ENCODE measurements at regions of chr12 and their contacts with region 1.

Region 1: GRCh38 chr12:42482445-42483237 is 106.9 kb downstream of the PRICKLE1 start:
- DNase-seq: peak; percentile 31
- H3K4me3 Mint-ChIP-seq: peak overlapping the region; percentile 78
- H3K27ac Mint-ChIP-seq: no peak overlapping the region
- H3K4me1 Mint-ChIP-seq: peaks cover 10% of the 10 kb centered on the region
- H3K27me3 Mint-ChIP-seq: peaks cover 72% of the 10 kb centered on the region

Region 2: DNA sequence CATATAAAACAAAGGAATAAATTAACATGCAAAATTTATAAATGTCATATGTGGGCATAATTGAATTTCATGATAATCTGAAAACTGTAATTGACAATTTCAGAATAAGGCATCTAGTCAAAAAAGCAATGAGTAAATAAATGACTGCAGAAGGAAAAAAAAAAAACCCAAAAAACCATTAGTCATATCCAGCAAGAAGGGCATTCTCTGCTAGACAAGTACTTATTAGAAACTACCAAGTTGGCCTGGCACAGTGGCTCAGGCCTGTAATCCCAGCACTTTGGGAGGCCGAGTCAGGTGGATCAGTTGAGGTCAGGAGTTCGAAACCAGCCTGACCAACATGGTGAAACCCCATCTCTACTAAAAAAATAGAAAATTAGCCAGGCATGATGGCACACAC is 174.3 kb before region 1 on chr12:
- intact Hi-C with region 1: no loop called
- DNase-seq: no peak
- H3K4me3 Mint-ChIP-seq: no peak overlapping the region
- H3K27ac Mint-ChIP-seq: no peak overlapping the region
- H3K4me1 Mint-ChIP-seq: no peaks in the 10 kb centered on the region
- H3K27me3 Mint-ChIP-seq: no peaks in the 10 kb centered on the region

Region 3: GRCh38 chr12:42469355-42470175 is 13.1 kb before region 1 on chr12:
- intact Hi-C with region 1: loop called (anchors 2 kb)
- DNase-seq: peak; percentile 8
- H3K4me3 Mint-ChIP-seq: peak overlapping the region; percentile 76
- H3K27ac Mint-ChIP-seq: peak overlapping the region; percentile 4
- H3K4me1 Mint-ChIP-seq: peaks cover 17% of the 10 kb centered on the region
- H3K27me3 Mint-ChIP-seq: peaks cover 5% of the 10 kb centered on the region

Region 4: GRCh38 chr12:42568952-42569915 is 86.6 kb after region 1 on chr12:
- intact Hi-C with region 1: loop called (anchors 1 kb)
- DNase-seq: no peak
- H3K4me3 Mint-ChIP-seq: no peak overlapping the region
- H3K27ac Mint-ChIP-seq: no peak overlapping the region
- H3K4me1 Mint-ChIP-seq: no peaks in the 10 kb centered on the region
- H3K27me3 Mint-ChIP-seq: peaks cover 4% of the 10 kb centered on the region

Region 5: GRCh38 chr12:42589465-42590329 is 107.1 kb after region 1 on chr12 and contains the start of gene PRICKLE1:
- intact Hi-C with region 1: loop called (anchors 1 kb)
- DNase-seq: peak; percentile 6
- H3K4me3 Mint-ChIP-seq: peak within 1 kb of the TSS; percentile 72
- H3K27ac Mint-ChIP-seq: peak within 1 kb of the TSS; percentile 43
- H3K4me1 Mint-ChIP-seq: peaks cover 20% of the 10 kb centered on the region
- H3K27me3 Mint-ChIP-seq: peaks cover 61% of the 10 kb centered on the region
- total RNA-seq, gene PRICKLE1: 0.34 TPM in 1 of 2 replicates, not detected in the other

Region 6: DNA sequence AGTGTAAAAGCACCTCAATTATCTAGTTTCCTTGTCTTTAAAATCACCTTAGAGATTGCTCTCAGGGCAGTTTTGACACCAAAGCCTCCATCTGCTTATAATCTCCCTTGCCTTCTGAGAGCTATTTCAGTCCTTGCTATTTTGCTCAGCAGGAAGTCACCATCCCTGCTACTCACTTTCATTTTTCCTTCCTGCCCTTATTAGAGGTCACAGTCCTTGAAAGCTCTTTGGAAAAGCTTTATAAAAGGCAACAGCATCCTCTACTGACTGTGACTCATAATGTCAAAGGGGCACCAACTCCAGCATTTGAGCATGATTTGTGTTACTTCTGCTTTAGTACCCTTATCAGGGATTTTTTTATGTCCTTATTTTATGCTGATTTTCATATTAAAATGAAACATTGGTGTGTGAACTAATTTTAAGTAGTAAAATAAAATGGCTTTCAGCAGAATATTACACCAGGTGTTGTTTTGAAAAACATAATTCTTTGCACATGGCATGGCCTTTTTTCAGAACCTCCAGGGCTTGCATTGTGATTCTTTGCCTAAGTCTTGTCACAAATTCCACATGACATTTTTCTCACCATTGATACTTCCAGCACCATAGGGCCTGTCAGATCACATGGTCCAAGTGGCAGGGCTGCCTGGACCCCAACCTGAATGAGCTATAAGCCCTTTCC is 856.3 kb after region 1 on chr12:
- intact Hi-C with region 1: loop called (anchors 5 kb)
- DNase-seq: no peak
- H3K4me3 Mint-ChIP-seq: no peak overlapping the region
- H3K27ac Mint-ChIP-seq: no peak overlapping the region
- H3K4me1 Mint-ChIP-seq: peaks cover 8% of the 10 kb centered on the region
- H3K27me3 Mint-ChIP-seq: no peaks in the 10 kb centered on the region

Measured in activated T-helper 1 cell treated with anti-CD3 and anti-CD28 coated beads, Interleukin-12 subunit alpha, Interleukin-12 subunit beta, Interleukin-2, Interleukin-4 antibody, amounts not matched to agents 30 ng/mL and 10 ng/mL and 1 ng/mL, durations not matched to agents 14 hours and 24 hours and 36 hours (primary cell).